Naive thymus-derived CD8-positive, alpha-beta T cell (primary cell): ENCODE measurements at regions of chr5 and their contacts with region 1.

Region 1: DNA sequence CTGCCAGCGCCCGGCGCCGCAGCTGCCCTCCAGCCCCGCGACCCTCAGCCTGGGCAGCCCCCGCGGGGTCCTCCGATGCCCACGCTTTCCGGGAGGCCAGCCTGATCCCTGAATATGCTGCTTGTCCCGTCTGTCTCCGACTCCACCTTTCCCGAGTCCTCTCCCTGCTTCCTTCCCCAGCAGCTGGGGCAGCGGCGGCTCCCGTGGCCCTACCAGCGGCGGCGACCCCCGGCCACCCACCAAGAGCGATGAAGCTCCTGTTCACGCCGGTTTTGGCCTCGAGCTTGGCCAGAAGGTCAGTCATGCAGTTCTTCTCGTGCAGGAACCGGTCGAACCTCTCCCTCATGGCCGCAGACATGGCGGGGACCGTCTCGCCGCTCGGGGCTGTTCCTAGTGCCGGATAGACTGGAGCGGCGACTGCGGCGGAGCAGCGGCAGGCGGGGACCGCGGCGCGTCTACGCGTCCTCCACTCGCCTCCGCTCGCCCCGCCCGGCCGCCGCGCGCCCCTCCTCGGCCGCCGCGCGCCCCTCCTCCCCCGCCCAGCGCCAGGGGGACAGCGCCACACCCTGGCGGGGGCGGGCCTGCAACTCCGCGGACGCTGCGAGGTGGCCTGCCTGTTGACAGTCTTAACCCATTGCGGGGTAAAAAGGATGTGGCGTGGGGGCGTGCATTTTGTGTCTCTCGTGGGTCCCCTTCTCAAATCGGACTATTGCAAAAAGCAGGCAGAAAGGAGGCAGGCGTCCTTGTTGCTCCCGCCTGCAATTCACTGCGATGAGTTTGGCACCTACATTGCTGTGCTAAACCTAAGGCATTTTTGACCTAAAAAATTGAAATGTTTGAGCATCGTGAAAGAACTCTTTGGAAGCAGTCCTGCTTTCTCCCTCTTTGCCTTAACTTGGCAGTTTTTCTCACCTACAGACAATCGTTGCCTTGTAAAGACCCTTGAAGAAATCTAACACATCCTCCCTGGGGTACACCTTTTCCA is at the start of gene REEP5:
- DNase-seq: peak; percentile 71 to 89 (median 83)
- ATAC-seq: peak; percentile 78 to 83
- H3K4me3 Mint-ChIP-seq: peak within 1 kb of the TSS; percentile 78 to 97 (median 92)
- H3K27ac Mint-ChIP-seq: peak within 1 kb of the TSS; percentile 91 to 97 (median 96)
- H3K4me1 Mint-ChIP-seq: peaks cover 31 to 80% (median 62%) of the 10 kb centered on the region in 4 donors
- H3K27me3 Mint-ChIP-seq: no peaks in the 10 kb centered on the region
- polyA plus RNA-seq, gene REEP5: 35.5 to 59.2 (median 39.3) TPM

Region 2: GRCh38 chr5:112684737-112685136 is 237.4 kb before region 1 on chr5:
- POLR2A ChIA-PET with region 1: no interaction called
- DNase-seq: no peak
- ATAC-seq: no peak
- H3K4me3 Mint-ChIP-seq: no peak overlapping the region
- H3K27ac Mint-ChIP-seq: no peak overlapping the region
- H3K4me1 Mint-ChIP-seq: peaks cover 0 to 5% (median 0%) of the 10 kb centered on the region in 4 donors
- H3K27me3 Mint-ChIP-seq: peaks cover 3 to 28% (median 18%) of the 10 kb centered on the region in 5 donors

Region 3: GRCh38 chr5:112811023-112811422 is 111.1 kb before region 1 on chr5:
- POLR2A ChIA-PET with region 1: interaction called, 12 read pairs
- DNase-seq: no peak
- ATAC-seq: no peak
- H3K4me3 Mint-ChIP-seq: no peak overlapping the region
- H3K27ac Mint-ChIP-seq: peak overlapping the region in 2 of 10 donors; percentile 10 to 79
- H3K4me1 Mint-ChIP-seq: peaks cover 1 to 7% (median 2%) of the 10 kb centered on the region in 4 donors
- H3K27me3 Mint-ChIP-seq: no peaks in the 10 kb centered on the region

Region 4: DNA sequence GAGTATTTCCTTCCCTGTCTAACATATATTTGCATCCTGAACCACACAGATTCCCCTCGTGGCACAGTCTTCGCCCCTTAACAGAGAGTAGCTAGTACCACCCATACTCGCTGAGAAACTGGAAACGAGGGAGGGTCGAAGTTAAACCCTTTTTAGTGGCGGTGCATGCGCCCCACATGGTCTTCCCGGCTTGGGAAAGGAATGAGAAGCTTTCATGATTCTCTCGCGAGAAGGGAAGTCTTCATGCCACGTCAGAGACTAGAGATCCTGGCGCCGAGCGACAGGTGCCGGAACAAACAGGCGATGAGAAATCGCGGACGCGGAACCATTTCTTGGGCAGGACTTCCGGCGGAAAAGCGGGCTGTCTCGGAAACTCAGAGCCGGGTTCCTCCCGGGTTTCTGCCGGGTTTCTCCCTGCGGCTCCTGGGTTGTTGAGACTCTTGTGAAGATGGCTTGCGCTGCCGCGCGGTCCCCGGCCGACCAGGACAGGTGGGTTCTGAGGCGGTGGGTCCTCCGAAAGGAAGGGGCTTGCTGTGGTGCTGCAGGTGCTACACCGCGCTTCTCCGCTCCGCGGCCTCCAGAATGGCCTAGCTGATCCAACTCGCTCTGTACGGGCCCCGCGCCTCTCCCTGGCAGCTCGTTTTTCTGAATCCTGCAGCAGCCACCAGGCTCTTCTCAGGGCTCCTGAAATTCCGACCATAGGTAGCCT is 61.0 kb before region 1 on chr5 and contains the start of gene SRP19:
- POLR2A ChIA-PET with region 1: interaction called, 14 read pairs
- DNase-seq: peak; percentile 83 to 94 (median 90)
- ATAC-seq: peak; percentile 94
- H3K4me3 Mint-ChIP-seq: peak within 1 kb of the TSS; percentile 91 to 98 (median 96)
- H3K27ac Mint-ChIP-seq: peak within 1 kb of the TSS; percentile 96 to 99 (median 98)
- H3K4me1 Mint-ChIP-seq: peaks cover 14 to 40% (median 28%) of the 10 kb centered on the region in 4 donors
- H3K27me3 Mint-ChIP-seq: peaks cover 0 to 12% (median 7%) of the 10 kb centered on the region in 5 donors
- polyA plus RNA-seq, gene SRP19: 84.4 to 133 (median 97.8) TPM

Region 5: GRCh38 chr5:112885001-112885400 is 37.1 kb before region 1 on chr5:
- POLR2A ChIA-PET with region 1: interaction called, 11 read pairs
- DNase-seq: no peak
- ATAC-seq: no peak
- H3K4me3 Mint-ChIP-seq: no peak overlapping the region
- H3K27ac Mint-ChIP-seq: peak overlapping the region in 5 of 10 donors; percentile 19 to 81 (median 69)
- H3K4me1 Mint-ChIP-seq: peaks cover 12 to 44% (median 31%) of the 10 kb centered on the region in 4 donors
- H3K27me3 Mint-ChIP-seq: no peaks in the 10 kb centered on the region

Region 6: GRCh38 chr5:112976432-112977309 is 54.5 kb after region 1 on chr5 and contains the start of gene DCP2:
- POLR2A ChIA-PET with region 1: interaction called, 44 read pairs
- DNase-seq: peak; percentile 84 to 97 (median 96)
- ATAC-seq: peak; percentile 93 to 94
- H3K4me3 Mint-ChIP-seq: peak within 1 kb of the TSS; percentile 96 to 100 (median 100)
- H3K27ac Mint-ChIP-seq: peak within 1 kb of the TSS; percentile 90 to 98 (median 97)
- H3K4me1 Mint-ChIP-seq: peaks cover 13 to 51% (median 46%) of the 10 kb centered on the region in 4 donors
- H3K27me3 Mint-ChIP-seq: no peaks in the 10 kb centered on the region
- polyA plus RNA-seq, gene DCP2: 48.3 to 53.0 (median 50.7) TPM